Ascending aorta (tissue), 2 donors: ENCODE measurements at regions of chr20 and their contacts with region 1.

Region 1: GRCh38 chr20:25696384-25697131 is at the start of gene ZNF337:
- DNase-seq: peak; percentile 85 to 98
- H3K4me3 ChIP-seq: peak within 1 kb of the TSS; percentile 74 to 82
- H3K27ac ChIP-seq: peak within 1 kb of the TSS; percentile 92 to 93
- H3K4me1 ChIP-seq: peaks cover 4 to 9% of the 10 kb centered on the region in 2 donors
- H3K27me3 ChIP-seq: no peaks in the 10 kb centered on the region
- CTCF ChIP-seq: peak in 2 of 3 experiments; percentile 27 to 31
- total RNA-seq, gene ZNF337: 3.4 TPM

Region 2: GRCh38 chr20:24970754-24971153 is 725.8 kb before region 1 on chr20:
- intact Hi-C with region 1: loop called (anchors 5 kb)
- DNase-seq: peak in 1 of 2 donors; percentile 59
- H3K4me3 ChIP-seq: no peak overlapping the region
- H3K27ac ChIP-seq: no peak overlapping the region
- H3K4me1 ChIP-seq: no peaks in the 10 kb centered on the region
- H3K27me3 ChIP-seq: no peaks in the 10 kb centered on the region
- CTCF ChIP-seq: no peak

Region 3: GRCh38 chr20:25390538-25391528 is 305.7 kb before region 1 on chr20 and contains the start of gene ABHD12:
- intact Hi-C with region 1: loop called (anchors 1 kb)
- DNase-seq: peak; percentile 91 to 99
- H3K4me3 ChIP-seq: peak within 1 kb of the TSS; percentile 83 to 99
- H3K27ac ChIP-seq: peak within 1 kb of the TSS; percentile 70 to 91
- H3K4me1 ChIP-seq: peaks cover 0 to 3% of the 10 kb centered on the region in 2 donors
- H3K27me3 ChIP-seq: no peaks in the 10 kb centered on the region
- CTCF ChIP-seq: no peak
- total RNA-seq, gene ABHD12: 24.3 TPM

Region 4: GRCh38 chr20:25565578-25566157 is 130.9 kb before region 1 on chr20:
- intact Hi-C with region 1: no loop called
- DNase-seq: no peak
- H3K4me3 ChIP-seq: no peak overlapping the region
- H3K27ac ChIP-seq: no peak overlapping the region
- H3K4me1 ChIP-seq: no peaks in the 10 kb centered on the region
- H3K27me3 ChIP-seq: no peaks in the 10 kb centered on the region
- CTCF ChIP-seq: no peak

Region 5: DNA sequence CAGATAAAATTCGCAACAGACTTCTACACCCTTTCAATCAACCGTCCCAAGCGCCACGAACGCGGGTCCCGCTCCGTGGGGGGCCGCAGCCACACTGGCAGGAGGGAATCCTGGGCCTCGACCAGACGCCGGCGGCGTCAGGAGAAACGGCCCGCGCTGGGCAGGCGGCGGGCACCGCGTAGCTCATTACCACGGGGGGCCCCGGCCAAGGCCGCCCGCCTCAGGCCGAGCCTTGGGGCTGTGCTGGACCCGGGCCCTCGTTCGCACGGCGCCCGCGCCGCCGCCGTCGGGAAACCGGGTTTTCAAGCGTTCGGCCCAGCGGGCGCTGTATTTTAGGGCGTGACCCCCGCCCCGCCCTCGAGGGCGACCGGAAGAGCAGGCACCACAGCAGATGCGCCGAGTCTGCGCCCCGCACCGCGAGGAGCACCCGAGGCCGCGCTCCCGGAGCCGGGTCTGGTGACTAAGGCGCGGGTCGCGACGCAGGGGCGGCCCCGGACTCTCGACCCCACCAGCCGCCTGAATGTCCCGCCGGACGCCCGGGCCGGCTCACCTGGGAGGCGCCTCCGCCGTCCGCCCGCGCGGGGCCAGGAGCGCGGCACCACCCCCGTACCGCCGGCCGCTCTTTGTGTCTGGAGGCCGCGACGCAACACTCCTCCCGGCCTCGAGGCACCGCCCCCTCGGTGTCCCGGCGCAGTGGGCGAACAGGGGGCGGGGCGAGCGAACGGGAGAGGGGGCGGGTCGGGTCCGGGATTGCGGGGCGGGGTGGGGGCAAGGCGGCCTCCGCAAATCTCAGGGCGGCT is 111.5 kb before region 1 on chr20 and contains the start of gene NINL:
- intact Hi-C with region 1: loop called (anchors 5 kb)
- DNase-seq: peak in 1 of 2 donors; percentile 78
- H3K4me3 ChIP-seq: peak within 1 kb of the TSS; percentile 68 to 76
- H3K27ac ChIP-seq: peak within 1 kb of the TSS; percentile 38 to 50
- H3K4me1 ChIP-seq: no peaks in the 10 kb centered on the region
- H3K27me3 ChIP-seq: no peaks in the 10 kb centered on the region
- CTCF ChIP-seq: no peak
- total RNA-seq, gene NINL: 18.0 TPM

Region 6: GRCh38 chr20:25720294-25720693 is 23.7 kb after region 1 on chr20:
- intact Hi-C with region 1: no loop called
- DNase-seq: no peak
- H3K4me3 ChIP-seq: no peak overlapping the region
- H3K27ac ChIP-seq: no peak overlapping the region
- H3K4me1 ChIP-seq: no peaks in the 10 kb centered on the region
- H3K27me3 ChIP-seq: no peaks in the 10 kb centered on the region
- CTCF ChIP-seq: no peak

Region 7: GRCh38 chr20:25987073-25987927 is 290.7 kb after region 1 on chr20:
- intact Hi-C with region 1: loop called (anchors 5 kb)
- DNase-seq: no peak
- H3K4me3 ChIP-seq: peak overlapping the region; percentile 32 to 62
- H3K27ac ChIP-seq: no peak overlapping the region
- H3K4me1 ChIP-seq: no peaks in the 10 kb centered on the region
- H3K27me3 ChIP-seq: no peaks in the 10 kb centered on the region
- CTCF ChIP-seq: peak in 2 of 3 experiments; percentile 33 to 41